Panc1 (cell line): ENCODE measurements at regions of chr6 and their contacts with region 1.

Region 1: GRCh38 chr6:77332915-77333623 is 130.2 kb downstream of the HTR1B start:
- DNase-seq: no peak
- ATAC-seq: no peak
- H3K4me3 ChIP-seq: no peak overlapping the region
- H3K27ac ChIP-seq: no peak overlapping the region
- H3K4me1 ChIP-seq: no peaks in the 10 kb centered on the region
- H3K27me3 ChIP-seq: no peaks in the 10 kb centered on the region
- CTCF ChIP-seq: no peak

Region 2: DNA sequence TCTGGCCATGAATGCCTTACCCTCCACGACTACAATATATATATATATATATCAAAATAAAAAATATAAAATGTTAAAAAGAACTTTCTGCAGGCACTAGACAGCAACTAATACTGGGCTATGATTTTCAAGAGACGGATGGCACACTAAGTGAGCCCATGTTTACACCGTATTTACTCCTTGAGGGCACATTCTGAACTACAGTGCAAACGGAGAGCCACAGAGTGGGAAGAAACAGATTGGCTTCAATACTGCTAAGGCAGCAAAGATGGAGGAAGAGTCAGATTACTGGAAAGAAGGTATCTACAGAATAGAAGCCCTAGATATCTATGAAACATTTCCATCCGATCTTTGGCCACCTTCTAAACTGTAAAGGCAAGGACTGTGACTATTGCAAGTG is 200.0 kb before region 1 on chr6:
- CTCF ChIA-PET with region 1: no interaction called
- POLR2A ChIA-PET with region 1: no interaction called
- in situ Hi-C with region 1: no loop called
- intact Hi-C with region 1: no loop called
- DNase-seq: no peak
- ATAC-seq: no peak
- H3K4me3 ChIP-seq: no peak overlapping the region
- H3K27ac ChIP-seq: no peak overlapping the region
- H3K4me1 ChIP-seq: no peaks in the 10 kb centered on the region
- H3K27me3 ChIP-seq: no peaks in the 10 kb centered on the region
- CTCF ChIP-seq: no peak

Region 3: GRCh38 chr6:77159730-77160129 is 173.3 kb before region 1 on chr6:
- CTCF ChIA-PET with region 1: no interaction called
- POLR2A ChIA-PET with region 1: no interaction called
- in situ Hi-C with region 1: no loop called
- intact Hi-C with region 1: no loop called
- DNase-seq: no peak
- ATAC-seq: no peak
- H3K4me3 ChIP-seq: no peak overlapping the region
- H3K27ac ChIP-seq: no peak overlapping the region
- H3K4me1 ChIP-seq: no peaks in the 10 kb centered on the region
- H3K27me3 ChIP-seq: no peaks in the 10 kb centered on the region
- CTCF ChIP-seq: no peak

Region 4: GRCh38 chr6:77313595-77313994 is 19.5 kb before region 1 on chr6:
- CTCF ChIA-PET with region 1: no interaction called
- POLR2A ChIA-PET with region 1: no interaction called
- in situ Hi-C with region 1: no loop called
- intact Hi-C with region 1: no loop called
- DNase-seq: no peak
- ATAC-seq: no peak
- H3K4me3 ChIP-seq: no peak overlapping the region
- H3K27ac ChIP-seq: no peak overlapping the region
- H3K4me1 ChIP-seq: no peaks in the 10 kb centered on the region
- H3K27me3 ChIP-seq: no peaks in the 10 kb centered on the region
- CTCF ChIP-seq: no peak

Region 5: GRCh38 chr6:77363702-77364101 is 30.6 kb after region 1 on chr6:
- CTCF ChIA-PET with region 1: no interaction called
- POLR2A ChIA-PET with region 1: no interaction called
- in situ Hi-C with region 1: no loop called
- intact Hi-C with region 1: loop called (anchors 1 kb)
- DNase-seq: no peak
- ATAC-seq: no peak
- H3K4me3 ChIP-seq: no peak overlapping the region
- H3K27ac ChIP-seq: no peak overlapping the region
- H3K4me1 ChIP-seq: no peaks in the 10 kb centered on the region
- H3K27me3 ChIP-seq: no peaks in the 10 kb centered on the region
- CTCF ChIP-seq: no peak